CD14-positive monocyte (primary cell): ENCODE measurements at regions of chr22 and their contacts with region 1.

Region 1: GRCh38 chr22:40024201-40025061 is 29.7 kb downstream of the FAM83F start:
- DNase-seq: peak; percentile 38 to 68 (median 67)
- H3K4me3 ChIP-seq: no peak overlapping the region
- H3K4me3 Mint-ChIP-seq: no peak overlapping the region
- H3K27ac ChIP-seq: no peak overlapping the region
- H3K27ac Mint-ChIP-seq: no peak overlapping the region
- H3K4me1 ChIP-seq: no peaks in the 10 kb centered on the region
- H3K4me1 Mint-ChIP-seq: no peaks in the 10 kb centered on the region
- H3K27me3 ChIP-seq: no peaks in the 10 kb centered on the region
- H3K27me3 Mint-ChIP-seq: peaks cover 3 to 11% (median 7%) of the 10 kb centered on the region in 3 donors
- CTCF ChIP-seq: peak; percentile 92

Region 2: GRCh38 chr22:39622881-39623367 is 401.5 kb before region 1 on chr22:
- intact Hi-C with region 1: loop called in 1 of 2 experiments (anchors 2 kb)
- DNase-seq: peak; percentile 2 to 23 (median 6)
- H3K4me3 ChIP-seq: no peak overlapping the region
- H3K4me3 Mint-ChIP-seq: no peak overlapping the region
- H3K27ac ChIP-seq: no peak overlapping the region
- H3K27ac Mint-ChIP-seq: no peak overlapping the region
- H3K4me1 ChIP-seq: no peaks in the 10 kb centered on the region
- H3K4me1 Mint-ChIP-seq: no peaks in the 10 kb centered on the region
- H3K27me3 ChIP-seq: peaks cover 0 to 17% of the 10 kb centered on the region in 2 donors
- H3K27me3 Mint-ChIP-seq: peaks cover 14 to 15% (median 14%) of the 10 kb centered on the region in 3 donors
- CTCF ChIP-seq: peak; percentile 60

Region 3: DNA sequence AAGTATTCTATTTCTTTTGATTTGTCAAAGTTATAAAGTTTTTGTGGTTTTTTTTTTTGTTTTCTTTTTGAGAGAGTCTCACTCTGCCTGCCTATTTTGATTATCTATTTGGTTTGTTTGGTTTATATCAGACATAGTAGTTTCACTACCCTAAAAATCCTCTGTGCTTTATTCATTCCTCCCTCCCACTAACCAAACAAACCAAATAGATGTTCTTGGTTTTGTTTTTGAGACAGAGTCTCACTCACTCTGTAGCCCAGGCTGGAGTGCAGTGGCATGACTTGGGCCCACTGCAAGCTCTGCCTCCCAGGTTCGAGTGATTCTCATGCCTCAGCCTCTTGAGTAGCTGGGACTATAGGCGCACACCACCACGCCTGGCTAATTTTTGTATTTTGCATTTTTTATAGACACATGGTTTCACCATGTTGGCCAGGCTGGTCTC is 198.7 kb before region 1 on chr22:
- intact Hi-C with region 1: no loop called
- DNase-seq: no peak
- H3K4me3 ChIP-seq: no peak overlapping the region
- H3K4me3 Mint-ChIP-seq: no peak overlapping the region
- H3K27ac ChIP-seq: no peak overlapping the region
- H3K27ac Mint-ChIP-seq: no peak overlapping the region
- H3K4me1 ChIP-seq: no peaks in the 10 kb centered on the region
- H3K4me1 Mint-ChIP-seq: peaks cover 4% of the 10 kb centered on the region
- H3K27me3 ChIP-seq: peaks cover 0 to 3% of the 10 kb centered on the region in 2 donors
- H3K27me3 Mint-ChIP-seq: peaks cover 3 to 6% (median 4%) of the 10 kb centered on the region in 3 donors
- CTCF ChIP-seq: no peak